Activated CD4-positive, alpha-beta T cell treated with anti-CD3 and anti-CD28 coated beads, Interleukin-2, amount 10 ng/mL, durations not matched to agents 7 days and 5 days (primary cell): ENCODE measurements at regions of chr9 and their contacts with region 1.

Region 1: GRCh38 chr9:76443892-76444581 is 14.9 kb upstream of the GCNT1 start:
- DNase-seq: no peak
- H3K4me3 Mint-ChIP-seq: no peak overlapping the region
- H3K27ac Mint-ChIP-seq: no peak overlapping the region
- H3K4me1 Mint-ChIP-seq: peaks cover 31% of the 10 kb centered on the region
- H3K27me3 Mint-ChIP-seq: no peaks in the 10 kb centered on the region

Region 2: DNA sequence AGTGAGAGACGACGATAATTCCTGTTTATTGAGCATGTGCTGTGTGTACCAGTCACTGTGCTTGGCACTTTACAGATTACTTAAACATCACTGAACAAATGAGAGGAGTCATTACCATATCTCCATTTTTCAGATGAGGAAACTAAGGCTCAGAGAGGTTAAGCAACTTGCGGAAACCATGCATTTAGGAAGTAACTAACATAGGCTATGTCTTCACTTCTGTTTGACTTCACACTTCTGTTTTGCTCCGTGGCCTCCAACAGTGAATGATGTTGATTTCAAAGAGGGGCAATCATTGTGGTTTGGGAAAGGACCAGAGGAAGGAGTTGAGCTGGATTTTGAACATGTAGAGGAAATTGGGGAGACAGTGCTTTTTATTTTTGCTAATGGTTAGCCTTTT is 31.6 kb after region 1 on chr9:
- CTCF ChIA-PET with region 1: no interaction called
- POLR2A ChIA-PET with region 1: no interaction called
- DNase-seq: no peak
- H3K4me3 Mint-ChIP-seq: no peak overlapping the region
- H3K27ac Mint-ChIP-seq: no peak overlapping the region
- H3K4me1 Mint-ChIP-seq: no peaks in the 10 kb centered on the region
- H3K27me3 Mint-ChIP-seq: no peaks in the 10 kb centered on the region

Region 3: GRCh38 chr9:76502746-76503145 is 58.7 kb after region 1 on chr9:
- CTCF ChIA-PET with region 1: no interaction called
- POLR2A ChIA-PET with region 1: no interaction called
- DNase-seq: no peak
- H3K4me3 Mint-ChIP-seq: no peak overlapping the region
- H3K27ac Mint-ChIP-seq: no peak overlapping the region
- H3K4me1 Mint-ChIP-seq: no peaks in the 10 kb centered on the region
- H3K27me3 Mint-ChIP-seq: no peaks in the 10 kb centered on the region

Region 4: DNA sequence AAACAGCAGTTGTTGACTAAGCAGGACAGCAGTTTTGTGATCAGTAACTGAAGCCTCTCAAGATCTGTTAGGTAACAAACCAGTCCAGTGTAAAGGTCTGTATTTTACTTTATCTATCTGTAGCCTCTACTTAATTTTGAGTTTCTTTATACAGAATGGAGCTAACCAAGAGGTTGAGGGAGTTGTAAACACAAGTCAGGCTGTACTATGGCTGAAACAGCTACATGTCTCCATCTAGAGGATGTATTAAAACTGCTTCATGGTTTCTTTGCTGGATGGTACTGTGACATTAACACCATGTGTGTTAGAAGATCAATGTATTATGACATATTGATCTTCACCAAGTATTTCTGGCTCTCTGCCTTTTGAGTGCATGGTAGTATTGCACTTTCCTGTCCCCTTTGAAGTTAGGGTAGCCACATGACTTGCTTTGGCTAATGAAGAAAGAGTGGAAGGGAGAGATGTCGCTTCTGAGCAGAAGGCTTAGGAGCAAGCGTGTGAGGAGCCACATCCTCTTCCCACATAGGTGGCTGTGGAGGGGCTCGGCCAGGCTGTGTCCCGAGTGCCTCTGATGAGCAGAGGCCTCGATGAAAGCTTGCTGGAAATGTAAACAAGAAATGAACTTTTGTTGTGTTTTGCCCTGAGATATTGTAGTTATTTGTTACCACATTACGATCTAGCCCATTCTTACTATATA is 214.6 kb after region 1 on chr9:
- CTCF ChIA-PET with region 1: interaction called, 29 read pairs
- POLR2A ChIA-PET with region 1: no interaction called
- DNase-seq: peak; percentile 29
- H3K4me3 Mint-ChIP-seq: no peak overlapping the region
- H3K27ac Mint-ChIP-seq: no peak overlapping the region
- H3K4me1 Mint-ChIP-seq: peaks cover 39% of the 10 kb centered on the region
- H3K27me3 Mint-ChIP-seq: peaks cover 8% of the 10 kb centered on the region

Region 5: GRCh38 chr9:77111408-77111807 is 667.4 kb after region 1 on chr9:
- CTCF ChIA-PET with region 1: no interaction called
- POLR2A ChIA-PET with region 1: no interaction called
- DNase-seq: no peak
- H3K4me3 Mint-ChIP-seq: no peak overlapping the region
- H3K27ac Mint-ChIP-seq: no peak overlapping the region
- H3K4me1 Mint-ChIP-seq: no peaks in the 10 kb centered on the region
- H3K27me3 Mint-ChIP-seq: peaks cover 12% of the 10 kb centered on the region